CD8-positive, alpha-beta T cell (primary cell): ENCODE measurements at regions of chr10 and their contacts with region 1.

Region 1: DNA sequence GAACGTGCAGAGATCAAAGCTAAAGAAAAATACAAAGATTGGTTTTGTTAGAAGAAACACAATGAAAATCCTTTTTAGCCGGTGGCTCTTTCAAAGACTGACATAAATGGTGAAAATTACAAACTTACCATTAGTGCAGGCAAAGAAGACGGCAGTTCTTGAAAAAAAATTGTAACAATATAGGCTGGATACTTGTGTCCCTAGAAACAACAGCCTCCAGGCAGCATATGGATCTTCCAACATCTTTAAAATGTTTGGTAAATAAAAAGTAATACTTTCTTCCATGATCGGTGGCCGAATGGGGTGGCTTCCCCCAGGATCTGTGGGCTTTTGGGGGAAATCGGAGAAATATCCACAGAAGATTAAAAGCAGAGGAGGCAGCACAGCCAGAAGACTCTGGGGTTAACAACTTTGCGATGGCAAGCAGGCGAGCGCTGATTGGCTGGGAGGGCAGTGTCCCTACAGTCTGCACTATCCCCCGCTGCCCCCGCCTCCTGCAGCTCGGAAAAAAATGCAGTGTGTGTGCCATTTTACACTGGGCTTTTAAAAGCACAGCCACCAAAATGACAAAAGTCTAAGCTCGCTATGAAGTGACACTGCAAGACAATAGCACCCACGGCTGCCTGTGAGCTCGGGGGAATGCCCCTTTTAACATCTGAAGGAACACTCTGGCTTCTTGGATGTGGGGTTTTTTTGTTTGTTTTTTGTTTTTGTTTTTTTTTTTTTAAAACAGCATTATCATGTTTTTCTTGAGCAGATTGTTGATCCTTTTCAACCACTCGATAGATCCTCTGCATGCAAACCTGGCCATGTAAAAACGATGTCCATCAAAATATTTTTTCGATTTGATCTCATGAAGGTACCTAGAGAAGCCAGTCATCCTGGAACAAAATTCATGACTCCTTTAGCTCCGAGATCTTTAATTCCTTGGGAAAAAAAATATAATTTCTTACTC is 31.7 kb upstream of the EPC1 start:
- DNase-seq: peak; percentile 86 to 96 (median 93)
- ATAC-seq: peak; percentile 88
- H3K4me3 ChIP-seq: peak overlapping the region; percentile 72 to 84
- H3K4me3 Mint-ChIP-seq: no peak overlapping the region
- H3K27ac ChIP-seq: peak overlapping the region; percentile 68 to 72
- H3K27ac Mint-ChIP-seq: no peak overlapping the region
- H3K4me1 ChIP-seq: peaks cover 19% of the 10 kb centered on the region
- H3K4me1 Mint-ChIP-seq: peaks cover 26% of the 10 kb centered on the region
- H3K27me3 ChIP-seq: no peaks in the 10 kb centered on the region
- H3K27me3 Mint-ChIP-seq: no peaks in the 10 kb centered on the region
- CTCF ChIP-seq: no peak

Region 2: DNA sequence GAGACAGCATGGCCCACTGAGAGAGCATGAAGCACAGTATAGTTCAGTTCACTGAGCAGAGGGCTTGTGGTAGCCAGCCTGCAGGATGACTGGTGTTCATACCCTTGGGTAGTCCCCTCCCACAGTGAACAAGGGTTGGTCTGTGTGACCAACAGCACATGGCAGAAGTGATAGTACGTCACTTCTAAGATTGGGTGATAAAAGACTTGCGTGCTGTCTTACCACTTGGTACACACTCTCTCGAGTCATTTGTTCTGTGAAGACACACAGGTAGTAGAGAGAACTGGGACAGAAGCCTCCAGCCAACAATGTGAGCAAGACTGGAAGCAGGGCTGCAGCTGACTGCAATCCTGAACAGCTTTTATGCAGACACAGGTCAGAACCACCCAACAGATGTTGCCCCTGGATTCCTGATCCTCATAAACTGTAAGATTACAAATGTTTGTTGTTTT is 46.3 kb before region 1 on chr10:
- CTCF ChIA-PET with region 1: no interaction called
- POLR2A ChIA-PET with region 1: no interaction called
- intact Hi-C with region 1: loop called in 1 of 2 experiments (anchors 1 kb)
- DNase-seq: peak; percentile 32 to 92 (median 69)
- ATAC-seq: peak; percentile 96
- H3K4me3 ChIP-seq: no peak overlapping the region
- H3K4me3 Mint-ChIP-seq: peak overlapping the region; percentile 73
- H3K27ac ChIP-seq: peak overlapping the region; percentile 12 to 55
- H3K27ac Mint-ChIP-seq: peak overlapping the region; percentile 90
- H3K4me1 ChIP-seq: peaks cover 91% of the 10 kb centered on the region
- H3K4me1 Mint-ChIP-seq: peaks cover 94% of the 10 kb centered on the region
- H3K27me3 ChIP-seq: no peaks in the 10 kb centered on the region
- H3K27me3 Mint-ChIP-seq: no peaks in the 10 kb centered on the region
- CTCF ChIP-seq: no peak

Region 3: GRCh38 chr10:32367793-32368453 is 10.7 kb before region 1 on chr10:
- CTCF ChIA-PET with region 1: interaction called, 15 read pairs
- POLR2A ChIA-PET with region 1: interaction called, 11 read pairs
- intact Hi-C with region 1: loop called in 1 of 2 experiments (anchors 1 kb)
- DNase-seq: peak; percentile 49 to 87 (median 78)
- ATAC-seq: peak; percentile 73
- H3K4me3 ChIP-seq: no peak overlapping the region
- H3K4me3 Mint-ChIP-seq: peak overlapping the region; percentile 23
- H3K27ac ChIP-seq: no peak overlapping the region
- H3K27ac Mint-ChIP-seq: peak overlapping the region; percentile 78
- H3K4me1 ChIP-seq: peaks cover 38% of the 10 kb centered on the region
- H3K4me1 Mint-ChIP-seq: peaks cover 65% of the 10 kb centered on the region
- H3K27me3 ChIP-seq: no peaks in the 10 kb centered on the region
- H3K27me3 Mint-ChIP-seq: no peaks in the 10 kb centered on the region
- CTCF ChIP-seq: peak; percentile 86

Region 4: GRCh38 chr10:32413513-32413912 is 34.9 kb after region 1 on chr10:
- CTCF ChIA-PET with region 1: no interaction called
- POLR2A ChIA-PET with region 1: no interaction called
- intact Hi-C with region 1: no loop called
- DNase-seq: peak in 2 of 9 experiments; percentile 3 to 21
- ATAC-seq: peak; percentile 79
- H3K4me3 ChIP-seq: no peak overlapping the region
- H3K4me3 Mint-ChIP-seq: no peak overlapping the region
- H3K27ac ChIP-seq: no peak overlapping the region
- H3K27ac Mint-ChIP-seq: no peak overlapping the region
- H3K4me1 ChIP-seq: no peaks in the 10 kb centered on the region
- H3K4me1 Mint-ChIP-seq: peaks cover 3% of the 10 kb centered on the region
- H3K27me3 ChIP-seq: no peaks in the 10 kb centered on the region
- H3K27me3 Mint-ChIP-seq: no peaks in the 10 kb centered on the region
- CTCF ChIP-seq: no peak

Region 5: DNA sequence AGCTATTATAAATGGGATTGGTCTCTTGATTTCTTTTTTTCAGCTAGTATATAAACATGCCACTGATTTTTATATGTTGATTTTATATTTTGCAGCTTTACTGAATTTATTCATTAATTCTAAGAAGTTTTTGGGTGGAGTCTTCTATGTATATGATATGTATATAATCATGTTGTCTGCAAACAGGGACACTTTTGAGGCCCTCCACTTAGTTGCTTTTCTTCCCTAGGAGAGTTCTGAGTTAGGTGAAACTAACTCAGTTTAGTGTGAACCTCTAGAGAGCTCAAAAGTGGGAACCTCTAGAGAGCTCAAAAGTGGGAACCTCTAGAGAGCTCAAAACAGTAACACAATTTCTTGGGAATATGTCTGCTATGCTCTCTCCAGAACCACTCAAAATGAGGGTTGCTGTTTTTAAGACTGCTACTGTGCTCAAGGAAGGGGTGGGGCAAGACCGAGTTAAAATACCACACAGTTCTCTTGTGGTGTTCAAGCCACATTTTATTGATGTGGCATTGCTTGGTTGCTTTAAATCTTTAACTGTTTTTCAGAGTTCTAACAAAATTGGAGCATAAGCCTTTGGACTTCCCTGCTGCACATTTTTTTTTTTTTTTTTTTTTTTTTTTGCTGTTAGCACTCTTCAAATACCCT is 80.5 kb after region 1 on chr10:
- CTCF ChIA-PET with region 1: interaction called, 9 read pairs
- POLR2A ChIA-PET with region 1: interaction called, 19 read pairs
- intact Hi-C with region 1: no loop called
- DNase-seq: peak; percentile 13 to 89 (median 55)
- ATAC-seq: peak; percentile 97
- H3K4me3 ChIP-seq: peak overlapping the region in 1 of 2 experiments; percentile 31
- H3K4me3 Mint-ChIP-seq: peak overlapping the region; percentile 44
- H3K27ac ChIP-seq: peak overlapping the region; percentile 28 to 40
- H3K27ac Mint-ChIP-seq: peak overlapping the region; percentile 88
- H3K4me1 ChIP-seq: peaks cover 41% of the 10 kb centered on the region
- H3K4me1 Mint-ChIP-seq: peaks cover 49% of the 10 kb centered on the region
- H3K27me3 ChIP-seq: no peaks in the 10 kb centered on the region
- H3K27me3 Mint-ChIP-seq: no peaks in the 10 kb centered on the region
- CTCF ChIP-seq: no peak

Region 6: GRCh38 chr10:32577448-32577847 is 198.8 kb after region 1 on chr10:
- CTCF ChIA-PET with region 1: no interaction called
- POLR2A ChIA-PET with region 1: no interaction called
- intact Hi-C with region 1: no loop called
- DNase-seq: no peak
- ATAC-seq: no peak
- H3K4me3 ChIP-seq: no peak overlapping the region
- H3K4me3 Mint-ChIP-seq: no peak overlapping the region
- H3K27ac ChIP-seq: no peak overlapping the region
- H3K27ac Mint-ChIP-seq: no peak overlapping the region
- H3K4me1 ChIP-seq: no peaks in the 10 kb centered on the region
- H3K4me1 Mint-ChIP-seq: no peaks in the 10 kb centered on the region
- H3K27me3 ChIP-seq: no peaks in the 10 kb centered on the region
- H3K27me3 Mint-ChIP-seq: no peaks in the 10 kb centered on the region
- CTCF ChIP-seq: no peak

Region 7: DNA sequence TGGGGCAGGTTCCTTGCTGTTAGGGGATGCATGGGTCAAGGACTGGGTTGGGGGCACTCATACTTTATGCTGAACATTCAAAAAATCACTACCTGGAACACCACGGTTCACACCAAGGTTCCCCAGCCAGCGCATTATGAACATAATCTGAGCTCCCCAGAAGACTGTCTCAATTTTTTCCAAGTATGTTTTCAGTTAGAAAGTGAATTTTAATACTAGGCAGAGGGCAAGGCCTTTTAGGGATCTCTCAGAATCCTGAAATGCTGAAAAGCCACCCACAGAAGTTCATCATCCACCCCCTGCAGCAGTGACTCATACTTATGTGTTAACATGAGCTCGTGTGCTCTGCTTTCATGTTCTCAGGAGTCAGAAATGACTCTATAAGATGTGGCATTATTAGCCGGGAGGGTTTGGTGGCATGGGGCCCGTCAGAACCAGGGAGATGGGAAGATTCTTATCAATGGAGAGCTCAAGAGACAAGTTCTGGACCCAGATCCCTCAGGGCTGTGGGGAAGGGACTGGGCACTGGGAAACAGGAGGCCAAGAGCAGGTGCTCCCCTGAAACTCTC is 764.6 kb after region 1 on chr10:
- CTCF ChIA-PET with region 1: no interaction called
- POLR2A ChIA-PET with region 1: no interaction called
- intact Hi-C with region 1: loop called (anchors 2 to 10 kb)
- DNase-seq: peak in 6 of 9 experiments; percentile 21 to 65 (median 42)
- ATAC-seq: peak; percentile 9
- H3K4me3 ChIP-seq: no peak overlapping the region
- H3K4me3 Mint-ChIP-seq: no peak overlapping the region
- H3K27ac ChIP-seq: no peak overlapping the region
- H3K27ac Mint-ChIP-seq: peak overlapping the region; percentile 55
- H3K4me1 ChIP-seq: peaks cover 33% of the 10 kb centered on the region
- H3K4me1 Mint-ChIP-seq: peaks cover 49% of the 10 kb centered on the region
- H3K27me3 ChIP-seq: no peaks in the 10 kb centered on the region
- H3K27me3 Mint-ChIP-seq: no peaks in the 10 kb centered on the region
- CTCF ChIP-seq: no peak

Region 8: DNA sequence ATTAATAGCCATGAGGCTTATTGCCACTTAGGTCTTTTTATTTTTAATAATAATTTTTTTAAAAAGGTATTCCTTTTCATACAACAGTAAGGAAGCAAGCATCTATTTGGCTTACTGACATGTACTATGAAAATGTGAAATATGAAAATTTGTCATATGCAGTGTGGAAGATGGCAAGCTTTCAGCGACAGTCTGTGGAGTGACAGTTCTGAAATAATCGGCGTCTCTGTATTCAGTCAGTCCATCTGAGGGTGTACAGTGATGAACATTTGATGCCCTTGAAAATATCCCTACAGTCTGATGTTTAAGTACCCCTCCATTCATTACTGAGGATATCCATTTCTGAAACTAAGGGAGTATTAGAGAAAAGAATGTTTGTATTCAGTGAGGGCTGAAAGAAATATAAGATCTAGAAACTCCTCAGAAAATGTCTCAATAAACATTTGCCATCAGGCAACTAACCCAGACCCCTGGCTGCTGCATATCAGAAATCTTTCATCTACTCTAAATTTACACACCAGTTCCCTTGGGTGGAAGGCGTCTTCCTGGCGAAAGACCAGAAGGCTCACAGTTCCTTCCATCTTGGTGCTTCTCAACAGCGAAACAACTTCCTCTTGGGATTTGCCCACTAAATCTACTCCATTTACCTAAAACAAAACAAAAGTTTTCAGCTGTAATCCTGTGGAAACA is 1995.9 kb after region 1 on chr10:
- CTCF ChIA-PET with region 1: no interaction called
- POLR2A ChIA-PET with region 1: no interaction called
- intact Hi-C with region 1: no loop called
- DNase-seq: no peak
- ATAC-seq: no peak
- H3K4me3 ChIP-seq: no peak overlapping the region
- H3K4me3 Mint-ChIP-seq: no peak overlapping the region
- H3K27ac ChIP-seq: no peak overlapping the region
- H3K27ac Mint-ChIP-seq: no peak overlapping the region
- H3K4me1 ChIP-seq: no peaks in the 10 kb centered on the region
- H3K4me1 Mint-ChIP-seq: peaks cover 3% of the 10 kb centered on the region
- H3K27me3 ChIP-seq: no peaks in the 10 kb centered on the region
- H3K27me3 Mint-ChIP-seq: no peaks in the 10 kb centered on the region
- CTCF ChIP-seq: no peak